Esophagus muscularis mucosa (tissue), 4 donors: ENCODE measurements at regions of chr12 and their contacts with region 1.

Region 1: DNA sequence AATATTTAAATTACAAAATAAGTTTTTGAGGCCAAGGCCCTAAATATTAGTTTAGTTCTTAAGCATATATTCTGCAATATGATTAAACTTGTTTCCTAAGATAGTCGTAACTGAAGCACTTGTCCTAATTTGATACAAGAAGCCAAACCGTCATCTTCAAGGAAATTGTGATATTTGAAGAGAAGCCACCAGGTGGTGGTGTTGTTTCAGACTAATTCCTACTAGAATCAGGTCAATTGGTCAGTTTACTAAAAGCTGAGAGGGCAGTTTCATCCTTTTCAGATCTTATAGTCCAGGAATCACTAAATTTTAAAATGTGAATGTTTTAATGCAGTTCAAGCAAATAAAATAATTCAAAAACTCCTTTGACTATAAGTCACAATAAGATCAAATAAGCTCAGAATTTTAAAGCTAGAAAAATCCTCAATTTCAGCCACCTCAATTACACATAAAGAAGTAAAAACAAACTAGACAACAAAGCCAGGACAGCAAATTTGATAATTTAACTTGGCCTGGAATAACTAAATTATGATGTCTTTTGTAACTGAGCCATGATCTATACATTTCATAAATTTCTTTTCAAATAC is 7.1 kb upstream of the ARL1 start:
- DNase-seq: no peak
- H3K4me3 ChIP-seq: no peak overlapping the region
- H3K27ac ChIP-seq: no peak overlapping the region
- H3K4me1 ChIP-seq: no peaks in the 10 kb centered on the region
- H3K27me3 ChIP-seq: no peaks in the 10 kb centered on the region
- CTCF ChIP-seq: peak; percentile 38 to 59 (median 46)
- EP300 ChIP-seq: no peak
- POLR2A ChIP-seq: no peak

Region 2: DNA sequence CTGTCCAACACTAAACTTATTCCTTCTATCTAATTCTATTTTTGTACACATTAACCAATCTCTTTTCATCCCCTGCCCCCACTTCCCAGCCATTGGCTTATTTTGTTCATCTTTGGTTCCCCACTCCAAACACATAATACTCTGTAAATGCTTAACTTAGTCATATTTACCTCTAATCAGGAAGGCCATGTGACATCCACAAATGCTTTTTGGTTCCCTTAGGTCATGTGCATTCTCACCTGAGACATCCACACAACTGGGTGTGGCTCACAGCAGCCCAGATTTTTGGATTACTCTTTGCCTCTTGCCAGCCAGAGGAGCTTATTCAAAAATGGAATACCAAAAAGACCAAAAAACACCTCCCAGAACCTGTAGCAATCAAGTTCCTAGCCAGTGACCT is 35.5 kb before region 1 on chr12:
- intact Hi-C with region 1: no loop called
- DNase-seq: no peak
- H3K4me3 ChIP-seq: no peak overlapping the region
- H3K27ac ChIP-seq: no peak overlapping the region
- H3K4me1 ChIP-seq: no peaks in the 10 kb centered on the region
- H3K27me3 ChIP-seq: no peaks in the 10 kb centered on the region
- CTCF ChIP-seq: no peak
- EP300 ChIP-seq: no peak
- POLR2A ChIP-seq: no peak

Region 3: GRCh38 chr12:101759396-101760047 is 344.9 kb after region 1 on chr12:
- intact Hi-C with region 1: loop called (anchors 5 kb)
- DNase-seq: no peak
- H3K4me3 ChIP-seq: no peak overlapping the region
- H3K27ac ChIP-seq: no peak overlapping the region
- H3K4me1 ChIP-seq: peaks cover 0 to 10% (median 3%) of the 10 kb centered on the region in 4 donors
- H3K27me3 ChIP-seq: no peaks in the 10 kb centered on the region
- CTCF ChIP-seq: peak; percentile 59 to 79 (median 66)
- EP300 ChIP-seq: no peak
- POLR2A ChIP-seq: no peak

Region 4: DNA sequence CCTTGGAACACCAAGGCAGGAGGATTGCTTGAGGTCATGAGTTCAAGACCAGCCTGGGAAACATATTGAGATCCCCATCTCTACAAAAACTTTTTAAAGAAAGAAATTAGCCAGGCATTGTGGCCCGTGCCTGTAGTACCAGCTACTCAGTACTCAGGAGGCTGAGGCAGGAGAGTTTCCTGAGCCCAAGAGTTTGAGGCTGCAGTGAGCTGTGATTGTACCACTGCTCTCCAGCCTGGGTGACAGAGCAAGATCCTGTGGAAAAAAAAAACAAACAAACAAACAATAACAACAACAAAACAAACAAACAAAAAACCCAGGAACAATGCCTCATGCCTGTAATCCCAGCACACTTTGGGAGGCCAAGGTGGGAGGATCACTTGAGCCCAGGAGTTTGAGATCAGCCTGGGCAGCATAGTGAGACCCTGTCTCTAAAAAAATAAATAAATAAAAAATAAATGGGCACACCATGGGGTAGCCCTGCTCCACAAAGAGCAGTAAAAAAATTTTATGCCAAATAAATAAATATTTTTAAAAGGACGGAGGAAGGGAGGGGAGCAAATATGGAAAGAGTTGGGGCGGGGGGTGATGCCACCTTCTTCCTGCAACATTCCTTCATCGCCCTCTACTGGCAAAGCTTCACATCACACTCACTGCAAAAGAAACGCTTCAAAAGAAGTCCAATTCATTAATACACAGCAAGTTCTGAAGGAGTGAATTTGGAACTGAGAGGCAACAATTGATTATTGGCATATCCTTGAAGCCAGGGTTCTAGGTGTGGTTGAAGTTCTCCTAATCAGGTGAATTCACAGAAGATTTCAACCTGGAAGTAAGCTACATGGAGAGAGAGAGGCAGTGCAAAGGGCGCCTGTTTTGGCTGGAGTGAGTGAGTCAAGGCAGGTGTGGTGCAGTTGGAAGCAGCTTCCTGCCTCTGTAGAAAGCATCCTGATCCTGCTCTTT is 425.0 kb after region 1 on chr12:
- intact Hi-C with region 1: loop called (anchors 10 kb)
- DNase-seq: no peak
- H3K4me3 ChIP-seq: no peak overlapping the region
- H3K27ac ChIP-seq: no peak overlapping the region
- H3K4me1 ChIP-seq: peaks cover 0 to 6% (median 3%) of the 10 kb centered on the region in 4 donors
- H3K27me3 ChIP-seq: no peaks in the 10 kb centered on the region
- CTCF ChIP-seq: peak; percentile 83 to 94 (median 85)
- EP300 ChIP-seq: no peak
- POLR2A ChIP-seq: no peak